GM12878 (cell line): ENCODE measurements at regions of chr3 and their contacts with region 1.

Region 1: DNA sequence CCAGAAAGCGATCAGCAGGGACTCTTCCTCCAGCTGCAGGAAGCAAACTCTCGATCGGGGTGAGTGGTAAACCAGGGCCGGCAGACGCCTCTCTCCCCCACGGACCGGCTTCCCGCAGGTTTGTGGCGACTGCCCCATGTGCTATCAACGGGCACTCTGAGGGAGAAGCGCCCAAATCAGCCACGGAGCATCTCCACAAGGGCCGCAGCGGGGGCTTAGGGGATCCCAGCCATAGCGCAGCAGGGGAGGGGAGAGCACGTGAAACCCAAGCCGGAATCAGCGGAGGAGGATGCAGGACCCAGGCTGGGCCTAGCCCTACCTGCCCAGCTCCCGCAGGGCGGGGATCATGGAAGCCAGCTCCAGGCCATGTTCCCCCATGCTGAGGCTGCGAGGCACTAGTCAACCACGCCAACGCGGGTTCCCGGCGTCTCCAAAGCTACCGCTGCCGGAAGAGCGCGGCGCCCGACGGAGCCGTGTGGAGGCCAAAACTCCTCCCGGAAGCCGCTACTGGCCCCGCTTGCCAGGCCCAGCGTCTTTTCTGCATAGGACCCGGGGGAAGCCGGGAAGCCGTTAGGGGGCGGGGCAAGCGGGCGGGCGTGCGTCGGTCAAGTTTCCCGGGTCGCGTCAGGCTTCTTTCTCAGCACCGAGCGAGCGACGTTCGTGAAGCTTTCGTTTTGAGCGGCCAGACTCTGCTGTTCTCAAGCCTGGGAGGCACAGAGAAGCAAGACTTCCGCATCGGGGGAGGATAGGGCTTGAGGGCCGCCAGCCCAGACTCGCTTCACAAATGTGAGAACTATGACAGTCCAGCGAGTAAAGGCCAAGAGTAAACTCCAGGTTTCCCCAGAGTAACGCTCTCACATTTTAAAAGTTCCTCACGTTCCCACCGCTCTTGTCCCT is at the start of gene ATR:
- DNase-seq: peak; percentile 87
- ATAC-seq: peak; percentile 95
- H3K4me3 ChIP-seq: peak within 1 kb of the TSS; percentile 96
- H3K27ac ChIP-seq: peak within 1 kb of the TSS; percentile 94
- H3K4me1 ChIP-seq: no peaks in the 10 kb centered on the region
- H3K27me3 ChIP-seq: no peaks in the 10 kb centered on the region
- CTCF ChIP-seq: 0 out of 6 replicates have a peak, but pooled peaks of 1 of the 3 experiments have one; percentile 3
- EP300 ChIP-seq: peak in 1 of 2 experiments; percentile 49; a peak in 1 of 4 replicates
- POLR2A ChIP-seq: peak; percentile 98
- RAD21 ChIP-seq: no peak
- polyA plus RNA-seq, gene ATR: 25.8 to 29.0 TPM

Region 2: DNA sequence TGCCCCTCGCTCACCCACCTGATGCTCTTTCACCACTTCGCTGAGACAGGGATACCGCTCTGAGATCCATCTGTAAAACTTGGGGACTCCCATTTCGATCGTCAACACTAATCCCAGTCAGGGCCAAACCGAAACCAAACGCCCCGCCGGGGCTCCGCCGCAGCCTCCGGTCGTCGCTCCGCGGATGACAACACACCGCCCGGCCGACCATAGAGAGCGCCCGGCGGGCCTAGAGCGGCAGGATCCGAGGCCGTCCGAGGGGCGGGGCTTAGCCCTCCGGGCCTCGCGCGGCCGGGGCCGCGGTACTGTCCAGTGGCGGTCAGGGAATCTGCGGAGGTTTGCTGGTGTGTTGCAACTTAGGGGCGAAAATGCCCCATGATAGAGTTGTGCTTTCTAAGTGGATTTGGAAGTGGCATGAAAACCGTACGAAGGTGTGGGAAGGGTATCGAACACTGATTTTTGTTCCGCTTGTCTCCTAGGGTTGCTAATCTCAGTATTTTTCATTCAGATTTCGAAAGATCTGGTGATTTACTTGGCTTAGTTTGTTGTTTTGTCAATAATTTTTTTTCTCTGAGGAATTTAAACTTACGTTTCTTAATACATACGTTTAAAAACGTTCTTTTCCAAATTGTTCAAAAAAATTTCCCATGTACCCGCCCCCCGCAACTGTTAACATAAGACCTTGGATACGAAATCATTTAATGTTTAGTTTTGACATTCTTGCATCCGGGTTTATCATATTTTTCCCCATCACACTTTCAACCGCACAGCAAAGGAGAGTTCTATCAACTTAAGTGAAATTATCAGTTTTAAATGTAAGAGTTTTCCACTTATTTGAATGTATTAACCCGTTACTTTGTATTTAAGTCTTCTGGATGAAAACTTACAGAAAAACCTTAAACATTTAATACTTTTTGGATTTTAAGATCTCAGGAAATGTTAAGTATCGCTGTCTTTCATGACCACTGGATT is 130.4 kb before region 1 on chr3 and contains the start of gene XRN1:
- CTCF ChIA-PET with region 1: no interaction called
- POLR2A ChIA-PET with region 1: no interaction called
- RAD21 ChIA-PET with region 1: no interaction called
- SMC1A ChIA-PET with region 1: interaction called, 3 read pairs
- in situ Hi-C with region 1: no loop called
- intact Hi-C with region 1: loop called (anchors 2 kb)
- DNase-seq: peak; percentile 57
- ATAC-seq: peak; percentile 94
- H3K4me3 ChIP-seq: peak within 1 kb of the TSS; percentile 87
- H3K27ac ChIP-seq: peak within 1 kb of the TSS; percentile 97
- H3K4me1 ChIP-seq: no peaks in the 10 kb centered on the region
- H3K27me3 ChIP-seq: no peaks in the 10 kb centered on the region
- CTCF ChIP-seq: no peak
- EP300 ChIP-seq: no peak
- POLR2A ChIP-seq: peak; percentile 93
- RAD21 ChIP-seq: no peak
- polyA plus RNA-seq, gene XRN1: 1.7 to 7.5 TPM

Region 3: GRCh38 chr3:142595951-142596725 is 17.6 kb after region 1 on chr3 and contains the start of gene PLS1:
- CTCF ChIA-PET with region 1: interaction called, 3 read pairs
- POLR2A ChIA-PET with region 1: interaction called, 3 read pairs
- RAD21 ChIA-PET with region 1: no interaction called
- SMC1A ChIA-PET with region 1: interaction called, 3 read pairs
- in situ Hi-C with region 1: no loop called
- intact Hi-C with region 1: loop called (anchors 1 kb)
- DNase-seq: peak; percentile 37
- ATAC-seq: peak; percentile 90
- H3K4me3 ChIP-seq: peak within 1 kb of the TSS; percentile 79
- H3K27ac ChIP-seq: 0 out of 2 replicates have a peak within 1 kb of the TSS, but pooled peaks have one; percentile 33
- H3K4me1 ChIP-seq: peaks cover 4% of the 10 kb centered on the region; the same call in 1 of the 2 replicates
- H3K27me3 ChIP-seq: no peaks in the 10 kb centered on the region
- CTCF ChIP-seq: no peak
- EP300 ChIP-seq: no peak
- POLR2A ChIP-seq: peak; percentile 84
- RAD21 ChIP-seq: no peak
- polyA plus RNA-seq, gene PLS1: 1.2 TPM